Naive thymus-derived CD4-positive, alpha-beta T cell (primary cell): ENCODE measurements at regions of chr12 and their contacts with region 1.

Region 1: GRCh38 chr12:96241846-96242256 is 47.7 kb downstream of the ELK3 start:
- DNase-seq: peak in 8 of 9 donors; percentile 37 to 86 (median 81)
- ATAC-seq: peak; percentile 97
- H3K4me3 ChIP-seq: peak overlapping the region; percentile 28
- H3K4me3 Mint-ChIP-seq: peak overlapping the region; percentile 16 to 71 (median 58)
- H3K27ac ChIP-seq: peak overlapping the region; percentile 73
- H3K27ac Mint-ChIP-seq: peak overlapping the region; percentile 58 to 98 (median 91)
- H3K4me1 ChIP-seq: peaks cover 33 to 51% of the 10 kb centered on the region in 2 donors
- H3K4me1 Mint-ChIP-seq: peaks cover 33 to 70% (median 64%) of the 10 kb centered on the region in 7 donors
- H3K27me3 ChIP-seq: no peaks in the 10 kb centered on the region
- H3K27me3 Mint-ChIP-seq: no peaks in the 10 kb centered on the region

Region 2: DNA sequence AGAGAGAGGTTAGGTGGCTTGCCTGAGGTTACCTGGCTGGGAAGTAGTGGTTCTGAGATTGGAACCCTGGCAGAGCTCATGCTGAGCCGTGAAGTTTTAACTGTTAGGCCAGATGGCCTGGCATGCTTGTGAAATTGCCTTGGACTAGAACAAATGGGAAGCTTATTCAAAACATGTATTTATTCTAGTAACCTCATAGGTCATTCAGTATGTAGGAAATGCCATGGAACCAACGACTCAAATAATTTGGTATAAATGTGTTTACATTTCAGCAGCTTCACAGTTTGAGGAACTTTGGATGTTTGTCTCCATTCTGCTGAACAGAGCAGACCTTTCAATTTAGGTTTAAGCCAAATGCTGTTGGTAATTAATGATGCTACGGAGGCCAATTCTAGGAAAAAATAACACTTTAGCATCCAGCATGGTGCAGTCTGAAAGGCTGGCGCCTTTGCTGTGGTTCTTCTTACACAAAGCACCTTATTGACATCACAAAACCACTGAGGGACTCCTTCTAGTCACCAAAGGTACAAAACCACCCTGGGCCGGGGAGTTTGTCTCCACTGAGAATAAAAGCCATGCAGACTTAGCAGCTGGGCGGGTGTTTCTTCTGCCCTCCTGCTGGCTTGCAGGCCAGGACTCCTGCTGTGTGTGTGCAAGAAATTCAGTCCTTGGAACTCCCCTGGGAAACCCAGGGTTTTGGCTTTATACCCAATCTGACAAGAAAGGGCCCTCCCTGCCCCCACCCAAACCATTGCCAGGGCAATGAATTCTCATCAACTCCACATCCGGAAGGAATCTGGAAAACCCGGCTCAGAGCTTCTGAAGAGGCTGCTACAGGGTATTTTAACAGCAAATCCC is 16.5 kb after region 1 on chr12:
- CTCF ChIA-PET with region 1: interaction called, 3 read pairs
- POLR2A ChIA-PET with region 1: interaction called, 10 read pairs
- intact Hi-C with region 1: loop called in 1 of 2 experiments (anchors 1 kb)
- DNase-seq: peak in 5 of 9 donors; percentile 21 to 44 (median 24)
- ATAC-seq: peak; percentile 77
- H3K4me3 ChIP-seq: no peak overlapping the region
- H3K4me3 Mint-ChIP-seq: peak overlapping the region in 1 of 10 donors; percentile 9
- H3K27ac ChIP-seq: peak overlapping the region; percentile 38
- H3K27ac Mint-ChIP-seq: no peak overlapping the region
- H3K4me1 ChIP-seq: peaks cover 0 to 5% of the 10 kb centered on the region in 2 donors
- H3K4me1 Mint-ChIP-seq: peaks cover 9 to 18% (median 15%) of the 10 kb centered on the region in 7 donors
- H3K27me3 ChIP-seq: no peaks in the 10 kb centered on the region
- H3K27me3 Mint-ChIP-seq: no peaks in the 10 kb centered on the region

Region 3: GRCh38 chr12:97022536-97023230 is 780.8 kb after region 1 on chr12:
- CTCF ChIA-PET with region 1: no interaction called
- POLR2A ChIA-PET with region 1: no interaction called
- intact Hi-C with region 1: no loop called
- DNase-seq: no peak
- ATAC-seq: no peak
- H3K4me3 ChIP-seq: no peak overlapping the region
- H3K4me3 Mint-ChIP-seq: no peak overlapping the region
- H3K27ac ChIP-seq: no peak overlapping the region
- H3K27ac Mint-ChIP-seq: no peak overlapping the region
- H3K4me1 ChIP-seq: no peaks in the 10 kb centered on the region
- H3K4me1 Mint-ChIP-seq: no peaks in the 10 kb centered on the region
- H3K27me3 ChIP-seq: no peaks in the 10 kb centered on the region
- H3K27me3 Mint-ChIP-seq: peaks cover 0 to 15% (median 9%) of the 10 kb centered on the region in 5 donors